Heart left ventricle (tissue), 16 donors: ENCODE measurements at regions of chr17 and their contacts with region 1.

Region 1: DNA sequence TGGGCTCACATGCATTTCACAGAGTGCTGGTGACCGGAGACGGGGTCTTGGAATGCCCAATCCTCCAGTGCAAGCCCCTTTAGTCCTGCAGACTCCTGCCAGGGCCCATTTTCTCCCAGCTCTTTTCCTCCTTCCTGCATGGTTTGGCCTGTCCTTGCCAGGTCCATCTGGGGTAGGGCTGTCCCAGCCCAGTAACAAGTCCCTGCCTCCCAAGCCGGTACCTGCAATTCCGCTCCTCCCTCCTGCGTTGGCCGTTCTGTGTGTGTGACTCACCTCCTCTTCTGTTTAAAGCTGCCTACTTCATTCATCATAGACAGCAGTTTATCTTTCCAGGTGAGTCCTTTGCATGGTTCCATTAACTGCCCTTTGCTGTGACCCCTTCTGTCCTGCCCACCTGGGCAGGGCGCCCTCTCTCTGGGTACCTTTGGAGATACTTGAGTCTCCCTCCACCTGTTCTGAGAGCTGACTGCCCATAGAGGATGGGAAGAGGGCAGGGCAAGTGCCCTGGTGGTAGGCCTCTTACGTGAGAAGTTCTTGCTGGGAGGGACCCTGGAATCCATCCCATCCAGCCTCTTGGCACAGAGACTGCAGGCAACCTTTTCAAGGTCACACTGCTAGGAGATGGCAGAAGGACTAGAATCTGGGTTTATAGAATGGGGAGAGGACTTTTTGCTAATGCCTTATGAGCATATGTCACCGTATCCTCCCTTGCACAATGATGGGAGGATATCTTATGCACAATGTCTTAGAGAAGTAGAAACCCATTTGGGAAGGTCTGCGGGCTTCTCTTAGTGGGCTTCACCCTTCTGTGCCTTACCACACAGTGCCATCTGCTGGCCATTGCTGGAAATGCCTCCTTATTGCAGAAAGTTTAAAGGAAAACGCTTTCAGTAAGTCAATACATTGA is 29.7 kb upstream of the LGALS9 start:
- DNase-seq: peak; percentile 72 to 82 (median 79)
- ATAC-seq: peak in 3 of 4 donors; percentile 54 to 57 (median 55)
- H3K4me3 ChIP-seq: no peak overlapping the region
- H3K27ac ChIP-seq: no peak overlapping the region
- H3K4me1 ChIP-seq: peaks cover 0 to 24% (median 7%) of the 10 kb centered on the region in 12 donors
- H3K27me3 ChIP-seq: no peaks in the 10 kb centered on the region
- CTCF ChIP-seq: peak; percentile 91 to 96 (median 94)
- POLR2A ChIP-seq: no peak

Region 2: DNA sequence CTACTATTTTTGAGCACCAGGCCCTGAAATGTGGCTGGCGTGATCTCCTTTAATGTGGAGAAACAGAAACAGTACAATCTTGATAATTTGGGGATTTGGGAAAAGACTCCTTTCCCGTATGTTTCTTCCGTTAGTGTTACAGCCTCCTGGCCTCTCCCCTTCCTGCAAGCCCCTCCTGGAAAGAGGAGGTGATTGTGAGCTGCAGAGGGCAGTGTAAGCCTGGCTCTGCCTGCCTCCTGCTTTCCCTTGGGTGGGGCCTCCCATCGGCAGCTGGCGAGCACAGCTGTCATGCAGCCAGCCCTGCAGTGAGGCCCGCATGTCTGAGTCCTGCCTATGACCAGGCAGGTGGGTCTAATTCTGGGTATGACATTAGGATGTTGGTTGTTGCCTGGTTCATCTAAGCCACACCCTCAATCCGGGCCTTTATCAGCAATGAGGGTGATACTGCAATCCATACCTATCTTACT is 356.1 kb before region 1 on chr17:
- intact Hi-C with region 1: loop called in 2 of 10 experiments (anchors 2 to 5 kb)
- DNase-seq: peak; percentile 83 to 92 (median 89)
- ATAC-seq: peak; percentile 91 to 96 (median 93)
- H3K4me3 ChIP-seq: peak overlapping the region in 7 of 12 donors; percentile 1 to 38 (median 19)
- H3K27ac ChIP-seq: peak overlapping the region; percentile 78 to 97 (median 84)
- H3K4me1 ChIP-seq: peaks cover 0 to 72% (median 39%) of the 10 kb centered on the region in 12 donors
- H3K27me3 ChIP-seq: no peaks in the 10 kb centered on the region
- CTCF ChIP-seq: peak; percentile 57 to 91 (median 80)
- POLR2A ChIP-seq: no peak

Region 3: DNA sequence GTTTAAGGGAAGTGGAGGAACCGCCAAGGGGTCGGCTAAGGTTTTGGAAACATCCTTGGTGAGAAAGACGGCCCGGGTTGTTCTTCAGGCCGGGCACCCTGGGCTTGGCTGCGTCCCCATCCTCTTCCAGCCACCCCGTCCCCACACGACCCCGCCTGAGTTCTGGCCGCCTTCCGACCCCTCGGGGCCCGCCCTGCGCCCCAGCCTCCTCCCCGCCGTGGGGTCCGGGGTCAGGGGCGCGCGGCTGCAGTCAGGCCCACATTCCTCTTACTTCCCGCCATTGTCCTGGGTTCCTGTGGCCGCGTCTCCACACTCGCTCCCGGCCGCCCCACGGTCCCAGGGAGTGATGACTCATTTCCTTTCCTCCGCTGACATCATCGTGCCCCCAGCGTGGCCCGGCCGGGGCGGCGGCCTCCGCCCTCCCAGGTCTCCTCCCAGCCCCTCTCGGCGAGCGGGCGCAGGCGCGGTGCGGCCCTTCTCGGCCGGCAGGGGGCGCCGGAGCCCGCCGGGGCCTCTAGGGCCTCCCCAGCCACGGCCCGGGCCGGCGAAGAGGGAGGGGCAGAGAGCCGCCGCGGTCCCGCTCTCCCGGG is 247.8 kb before region 1 on chr17:
- intact Hi-C with region 1: loop called (anchors 1 to 5 kb)
- DNase-seq: peak; percentile 95 to 97 (median 95)
- ATAC-seq: peak; percentile 92 to 97 (median 94)
- H3K4me3 ChIP-seq: peak overlapping the region; percentile 46 to 90 (median 66)
- H3K27ac ChIP-seq: peak overlapping the region; percentile 80 to 99 (median 96)
- H3K4me1 ChIP-seq: peaks cover 0 to 32% (median 21%) of the 10 kb centered on the region in 12 donors
- H3K27me3 ChIP-seq: no peaks in the 10 kb centered on the region
- CTCF ChIP-seq: peak; percentile 64 to 99 (median 98)
- POLR2A ChIP-seq: peak in 1 of 2 donors; percentile 81

Region 4: GRCh38 chr17:27502526-27503324 is 98.6 kb before region 1 on chr17:
- intact Hi-C with region 1: loop called in 2 of 10 experiments (anchors 5 to 10 kb)
- DNase-seq: peak in 1 of 5 donors; percentile 31
- ATAC-seq: peak; percentile 50 to 69 (median 60)
- H3K4me3 ChIP-seq: no peak overlapping the region
- H3K27ac ChIP-seq: no peak overlapping the region
- H3K4me1 ChIP-seq: peaks cover 0 to 25% (median 7%) of the 10 kb centered on the region in 12 donors
- H3K27me3 ChIP-seq: no peaks in the 10 kb centered on the region
- CTCF ChIP-seq: no peak
- POLR2A ChIP-seq: no peak

Region 5: GRCh38 chr17:27526604-27527230 is 74.6 kb before region 1 on chr17:
- intact Hi-C with region 1: no loop called
- DNase-seq: peak in 2 of 5 donors; percentile 43 to 48
- ATAC-seq: peak in 3 of 4 donors; percentile 66 to 76 (median 71)
- H3K4me3 ChIP-seq: no peak overlapping the region
- H3K27ac ChIP-seq: peak overlapping the region in 1 of 12 donors; percentile 30
- H3K4me1 ChIP-seq: peaks cover 0 to 59% (median 5%) of the 10 kb centered on the region in 12 donors
- H3K27me3 ChIP-seq: no peaks in the 10 kb centered on the region
- CTCF ChIP-seq: no peak
- POLR2A ChIP-seq: no peak

Region 6: GRCh38 chr17:27654654-27655524 is 53.6 kb after region 1 on chr17:
- intact Hi-C with region 1: loop called in 7 of 10 experiments (anchors 1 to 2 kb)
- DNase-seq: peak; percentile 50 to 82 (median 69)
- ATAC-seq: peak in 3 of 4 donors; percentile 35 to 46 (median 40)
- H3K4me3 ChIP-seq: no peak overlapping the region
- H3K27ac ChIP-seq: no peak overlapping the region
- H3K4me1 ChIP-seq: peaks cover 0 to 5% (median 0%) of the 10 kb centered on the region in 12 donors
- H3K27me3 ChIP-seq: no peaks in the 10 kb centered on the region
- CTCF ChIP-seq: peak; percentile 83 to 99 (median 92)
- POLR2A ChIP-seq: no peak